ENCODE measurements at regions of chr22 and their contacts with region 1.

Region 1: GRCh38 chr22:40243891-40244290 is 66.2 kb downstream of the TNRC6B start:
- DNase-seq: peak; percentile 23
- H3K4me3 Mint-ChIP-seq: no peak overlapping the region
- H3K27ac Mint-ChIP-seq: peak overlapping the region; percentile 26
- H3K4me1 Mint-ChIP-seq: peaks cover 74% of the 10 kb centered on the region
- H3K27me3 Mint-ChIP-seq: no peaks in the 10 kb centered on the region

Region 2: DNA sequence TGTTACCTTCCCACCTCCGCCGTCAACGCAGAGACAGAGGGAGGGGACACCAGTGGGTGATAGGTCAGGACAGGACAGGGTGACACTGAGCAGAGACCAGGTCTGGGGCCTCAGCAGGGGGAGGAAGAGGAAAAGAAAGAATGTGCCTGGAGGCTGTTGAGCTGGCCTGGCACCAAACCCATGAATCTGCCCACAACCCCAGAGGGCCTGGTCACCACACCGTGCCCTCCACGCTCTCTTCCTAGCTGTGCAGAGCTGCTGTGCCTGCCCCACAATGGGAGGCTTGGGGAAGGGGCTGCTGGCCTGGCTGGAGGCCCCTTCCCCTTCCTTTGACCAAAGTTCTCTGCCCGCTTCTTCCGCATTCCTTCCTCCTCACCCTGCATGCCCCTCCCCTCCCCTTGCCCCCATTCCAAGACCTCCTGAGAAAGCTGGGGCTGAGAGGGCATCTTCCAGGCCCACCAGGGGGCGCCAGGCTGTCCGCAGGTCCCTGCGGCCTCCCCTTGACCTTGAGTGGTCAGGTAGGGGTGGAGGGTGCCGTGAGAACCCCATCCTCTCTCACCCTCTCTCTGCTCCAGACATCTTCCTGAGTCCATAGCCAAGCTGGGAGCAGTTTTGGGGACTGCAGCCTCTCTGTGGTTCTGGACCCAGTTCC is 684.3 kb before region 1 on chr22:
- CTCF ChIA-PET with region 1: no interaction called
- intact Hi-C with region 1: no loop called
- DNase-seq: no peak
- H3K4me3 Mint-ChIP-seq: no peak overlapping the region
- H3K27ac Mint-ChIP-seq: no peak overlapping the region
- H3K4me1 Mint-ChIP-seq: peaks cover 4% of the 10 kb centered on the region
- H3K27me3 Mint-ChIP-seq: peaks cover 13% of the 10 kb centered on the region

Region 3: DNA sequence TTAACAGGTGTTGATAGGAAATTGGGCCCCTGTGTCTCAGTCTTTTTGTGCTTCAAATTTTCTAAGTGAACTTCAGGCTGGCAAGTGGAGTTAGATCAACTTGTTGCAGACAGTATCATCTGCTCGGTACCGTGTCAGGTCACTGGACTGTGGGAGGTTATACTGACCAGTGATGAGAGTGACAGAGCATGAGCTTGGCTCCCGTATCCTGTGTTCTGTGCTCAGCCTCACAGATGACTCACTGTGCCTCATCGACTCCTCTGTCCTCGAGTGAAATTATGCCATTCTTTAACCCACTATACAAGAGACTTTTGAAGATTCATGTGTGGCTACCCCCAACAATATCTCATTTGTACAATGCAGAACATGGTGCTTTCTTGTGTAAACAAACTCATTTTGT is 335.2 kb before region 1 on chr22:
- CTCF ChIA-PET with region 1: no interaction called
- intact Hi-C with region 1: no loop called
- DNase-seq: peak; percentile 65
- H3K4me3 Mint-ChIP-seq: peak overlapping the region; percentile 90
- H3K27ac Mint-ChIP-seq: peak overlapping the region; percentile 100
- H3K4me1 Mint-ChIP-seq: peaks cover 57% of the 10 kb centered on the region
- H3K27me3 Mint-ChIP-seq: no peaks in the 10 kb centered on the region

Region 4: DNA sequence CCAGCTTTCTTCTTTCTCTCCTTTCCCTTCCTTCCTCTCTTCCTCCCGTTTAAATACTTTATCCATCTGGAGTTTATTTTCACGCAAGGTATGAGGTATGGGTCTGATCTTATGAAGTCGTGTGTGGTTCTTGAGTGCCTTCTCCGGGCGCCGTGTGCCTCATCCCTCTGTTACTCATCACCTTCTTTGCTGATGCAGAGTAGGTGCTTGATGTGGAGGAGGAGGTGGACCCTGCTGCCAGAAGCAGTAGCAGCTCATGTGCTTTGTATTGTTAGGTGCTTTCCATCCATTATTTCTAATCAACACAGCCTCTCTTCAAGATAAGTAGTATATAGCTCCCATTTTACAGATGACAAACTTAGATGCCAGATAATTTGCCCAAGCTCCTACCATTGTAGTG is 19.2 kb before region 1 on chr22:
- CTCF ChIA-PET with region 1: interaction called, 5 read pairs
- intact Hi-C with region 1: loop called (anchors 2 kb)
- DNase-seq: peak; percentile 79
- H3K4me3 Mint-ChIP-seq: peak overlapping the region; percentile 61
- H3K27ac Mint-ChIP-seq: peak overlapping the region; percentile 83
- H3K4me1 Mint-ChIP-seq: peaks cover 57% of the 10 kb centered on the region
- H3K27me3 Mint-ChIP-seq: no peaks in the 10 kb centered on the region

Region 5: DNA sequence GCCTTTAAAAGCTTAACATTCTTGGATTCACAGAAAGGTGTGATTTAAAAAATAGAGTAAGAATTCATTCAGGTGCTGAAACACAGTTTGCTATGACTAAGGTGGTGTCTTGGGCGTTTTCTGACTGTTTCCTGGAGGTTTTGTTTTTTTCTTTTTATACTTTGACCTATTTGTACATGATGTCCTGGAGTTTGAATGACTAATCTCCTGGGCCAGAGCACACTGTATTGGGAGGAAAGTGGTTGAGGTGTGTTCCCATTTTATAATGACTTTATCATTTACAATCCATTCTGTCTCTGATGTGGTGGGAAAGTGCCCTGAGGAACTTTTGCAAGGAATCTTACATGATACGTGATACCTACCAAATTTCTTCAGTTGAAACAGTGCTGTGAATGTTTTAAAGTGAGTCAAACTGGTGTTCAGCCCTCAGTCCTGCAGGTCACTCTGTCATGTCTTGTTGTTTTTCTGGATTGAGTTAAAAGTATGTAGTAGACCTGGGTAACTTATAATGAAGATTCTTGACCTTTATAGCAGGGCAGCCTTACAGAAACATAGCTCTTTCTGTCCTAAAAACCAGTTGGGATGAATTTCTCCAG is 14.7 kb after region 1 on chr22:
- CTCF ChIA-PET with region 1: interaction called, 3 read pairs
- intact Hi-C with region 1: loop called (anchors 1 kb)
- DNase-seq: peak; percentile 46
- H3K4me3 Mint-ChIP-seq: no peak overlapping the region
- H3K27ac Mint-ChIP-seq: peak overlapping the region; percentile 66
- H3K4me1 Mint-ChIP-seq: peaks cover 60% of the 10 kb centered on the region
- H3K27me3 Mint-ChIP-seq: no peaks in the 10 kb centered on the region

Measured in activated naive CD4-positive, alpha-beta T cell treated with anti-CD3 and anti-CD28 coated beads for 36 hours (primary cell).